AG04450 (cell line): ENCODE measurements at regions of chr16 and their contacts with region 1.

Region 1: GRCh38 chr16:30844671-30845449 is 49.0 kb downstream of the BCL7C start:
- DNase-seq: peak; percentile 81
- H3K4me3 ChIP-seq: no peak overlapping the region
- H3K27ac ChIP-seq: peak overlapping the region; percentile 21
- H3K27me3 ChIP-seq: no peaks in the 10 kb centered on the region
- CTCF ChIP-seq: peak; percentile 95

Region 2: GRCh38 chr16:30829130-30830071 is 15.5 kb before region 1 on chr16:
- CTCF ChIA-PET with region 1: interaction called, 12 read pairs
- POLR2A ChIA-PET with region 1: interaction called, 3 read pairs
- DNase-seq: no peak
- H3K4me3 ChIP-seq: no peak overlapping the region
- H3K27ac ChIP-seq: no peak overlapping the region
- H3K27me3 ChIP-seq: no peaks in the 10 kb centered on the region
- CTCF ChIP-seq: peak; percentile 21; the same call in 1 of the 2 replicates

Region 3: DNA sequence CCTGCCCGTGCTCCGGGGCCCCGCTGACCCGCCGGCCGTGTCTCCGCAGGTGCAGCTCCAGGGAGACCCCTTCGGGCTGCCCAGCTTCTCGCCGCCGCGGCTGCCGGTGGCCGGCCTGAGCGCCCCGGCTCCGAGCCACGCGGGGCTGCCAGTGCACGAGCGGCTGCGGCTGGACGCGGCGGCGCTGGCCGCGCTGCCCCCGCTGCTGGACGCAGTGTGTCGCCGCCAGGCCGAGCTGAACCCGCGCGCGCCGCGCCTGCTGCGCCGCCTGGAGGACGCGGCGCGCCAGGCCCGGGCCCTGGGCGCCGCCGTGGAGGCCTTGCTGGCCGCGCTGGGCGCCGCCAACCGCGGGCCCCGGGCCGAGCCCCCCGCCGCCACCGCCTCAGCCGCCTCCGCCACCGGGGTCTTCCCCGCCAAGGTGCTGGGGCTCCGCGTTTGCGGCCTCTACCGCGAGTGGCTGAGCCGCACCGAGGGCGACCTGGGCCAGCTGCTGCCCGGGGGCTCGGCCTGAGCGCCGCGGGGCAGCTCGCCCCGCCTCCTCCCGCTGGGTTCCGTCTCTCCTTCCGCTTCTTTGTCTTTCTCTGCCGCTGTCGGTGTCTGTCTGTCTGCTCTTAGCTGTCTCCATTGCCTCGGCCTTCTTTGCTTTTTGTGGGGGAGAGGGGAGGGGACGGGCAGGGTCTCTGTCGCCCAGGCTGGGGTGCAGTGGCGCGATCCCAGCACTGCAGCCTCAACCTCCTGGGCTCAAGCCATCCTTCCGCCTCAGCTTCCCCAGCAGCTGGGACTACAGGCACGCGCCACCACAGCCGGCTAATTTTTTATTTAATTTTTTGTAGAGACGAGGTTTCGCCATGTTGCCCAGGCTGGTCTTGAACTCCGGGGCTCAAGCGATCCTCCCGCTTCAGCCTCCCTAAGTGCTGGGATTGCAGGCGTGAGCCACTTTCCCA is 57.4 kb after region 1 on chr16:
- CTCF ChIA-PET with region 1: interaction called, 59 read pairs
- POLR2A ChIA-PET with region 1: interaction called, 4 read pairs
- DNase-seq: no peak
- H3K4me3 ChIP-seq: peak overlapping the region; percentile 45
- H3K27ac ChIP-seq: peak overlapping the region; percentile 61
- H3K27me3 ChIP-seq: no peaks in the 10 kb centered on the region
- CTCF ChIP-seq: no peak

Region 4: GRCh38 chr16:30941600-30942425 is 97.0 kb after region 1 on chr16:
- CTCF ChIA-PET with region 1: interaction called, 20 read pairs
- POLR2A ChIA-PET with region 1: interaction called, 4 read pairs
- DNase-seq: no peak
- H3K4me3 ChIP-seq: no peak overlapping the region
- H3K27ac ChIP-seq: no peak overlapping the region
- H3K27me3 ChIP-seq: no peaks in the 10 kb centered on the region
- CTCF ChIP-seq: peak; percentile 85